CD14-positive monocyte (primary cell): ENCODE measurements at regions of chr16 and their contacts with region 1.

Region 1: GRCh38 chr16:21565861-21566669 is 33.3 kb upstream of the METTL9 start:
- DNase-seq: peak in 1 of 3 donors; percentile 26
- H3K4me3 ChIP-seq: no peak overlapping the region
- H3K4me3 Mint-ChIP-seq: no peak overlapping the region
- H3K27ac ChIP-seq: no peak overlapping the region
- H3K27ac Mint-ChIP-seq: peak overlapping the region in 1 of 7 donors; percentile 3
- H3K4me1 ChIP-seq: peaks cover 6 to 9% of the 10 kb centered on the region in 2 donors
- H3K4me1 Mint-ChIP-seq: peaks cover 10% of the 10 kb centered on the region
- H3K27me3 ChIP-seq: no peaks in the 10 kb centered on the region
- H3K27me3 Mint-ChIP-seq: peaks cover 0 to 8% (median 7%) of the 10 kb centered on the region in 3 donors
- CTCF ChIP-seq: no peak

Region 2: DNA sequence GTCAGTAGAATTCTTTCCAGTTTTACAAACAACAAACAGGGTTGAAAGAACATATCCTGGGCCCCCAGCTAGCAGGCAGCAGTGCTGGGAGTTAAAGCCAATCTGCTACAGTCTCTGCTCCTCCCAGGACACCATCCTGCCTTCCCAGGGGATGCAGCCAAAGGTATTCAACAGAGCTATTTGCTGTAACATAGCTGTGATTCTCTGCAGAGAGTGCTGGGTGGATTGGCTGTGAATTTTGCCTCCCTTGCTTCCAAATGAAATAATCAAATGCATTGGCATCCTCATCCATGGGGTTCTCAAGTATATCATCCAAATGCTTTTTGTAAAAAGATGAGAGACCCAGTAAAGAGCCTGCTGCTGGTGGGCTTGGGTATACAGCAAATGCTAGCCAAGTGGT is 1068.9 kb after region 1 on chr16:
- intact Hi-C with region 1: loop called in 1 of 2 experiments (anchors 5 kb)
- DNase-seq: no peak
- H3K4me3 ChIP-seq: no peak overlapping the region
- H3K4me3 Mint-ChIP-seq: no peak overlapping the region
- H3K27ac ChIP-seq: no peak overlapping the region
- H3K27ac Mint-ChIP-seq: no peak overlapping the region
- H3K4me1 ChIP-seq: no peaks in the 10 kb centered on the region
- H3K4me1 Mint-ChIP-seq: no peaks in the 10 kb centered on the region
- H3K27me3 ChIP-seq: peaks cover 16 to 25% of the 10 kb centered on the region in 2 donors
- H3K27me3 Mint-ChIP-seq: peaks cover 3 to 19% (median 12%) of the 10 kb centered on the region in 3 donors
- CTCF ChIP-seq: no peak